Activated CD4-positive, alpha-beta T cell treated with anti-CD3 and anti-CD28 coated beads, Interleukin-2, amount 10 ng/mL, durations not matched to agents 24 days and 14 days (primary cell): ENCODE measurements at regions of chr5 and their contacts with region 1.

Region 1: GRCh38 chr5:175657593-175658271 is at the start of gene HRH2:
- DNase-seq: peak; percentile 90
- H3K4me3 Mint-ChIP-seq: peak within 1 kb of the TSS; percentile 100
- H3K27ac Mint-ChIP-seq: peak within 1 kb of the TSS; percentile 98
- H3K4me1 Mint-ChIP-seq: peaks cover 77% of the 10 kb centered on the region
- H3K27me3 Mint-ChIP-seq: peaks cover 2% of the 10 kb centered on the region
- total RNA-seq, gene HRH2: 67.3 and 70.4 TPM in 2 replicates

Region 2: GRCh38 chr5:173887610-173888472 is 1769.9 kb before region 1 on chr5 and contains the start of gene CPEB4:
- intact Hi-C with region 1: loop called (anchors 10 kb)
- DNase-seq: peak; percentile 99
- H3K4me3 Mint-ChIP-seq: peak within 1 kb of the TSS; percentile 96
- H3K27ac Mint-ChIP-seq: peak within 1 kb of the TSS; percentile 99
- H3K4me1 Mint-ChIP-seq: peaks cover 60% of the 10 kb centered on the region
- H3K27me3 Mint-ChIP-seq: no peaks in the 10 kb centered on the region
- total RNA-seq, gene CPEB4: 7.6 and 8.8 TPM in 2 replicates

Region 3: DNA sequence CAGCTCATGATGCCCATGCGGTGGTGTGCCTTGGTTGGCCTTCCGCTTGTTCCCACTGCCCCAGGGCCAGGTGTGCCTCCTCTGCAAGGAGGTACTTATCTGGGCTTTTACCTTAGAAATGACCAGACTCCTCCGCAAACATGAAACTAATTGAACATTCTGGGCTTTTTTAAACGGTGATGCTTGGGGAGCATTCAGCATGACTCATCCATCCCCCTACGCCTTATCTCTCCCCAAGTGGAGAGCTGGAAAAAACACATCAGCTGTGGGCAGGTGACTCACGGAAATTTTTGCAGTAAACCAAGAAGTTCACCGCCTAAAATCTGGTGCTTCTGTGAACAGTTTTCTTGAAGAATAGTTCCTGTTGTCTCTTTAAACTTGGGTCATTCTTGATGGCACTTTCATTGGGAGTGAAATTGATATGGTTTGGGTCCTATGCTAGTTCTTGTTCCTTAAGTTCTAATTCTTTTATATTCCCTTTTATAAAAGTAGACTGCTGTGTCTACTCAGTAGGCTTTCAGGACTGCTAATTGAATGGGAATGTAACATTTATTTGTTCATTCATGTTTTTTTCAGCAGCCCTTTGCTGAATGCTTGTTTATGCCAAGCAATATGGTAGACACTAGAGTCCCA is 139.8 kb before region 1 on chr5:
- intact Hi-C with region 1: loop called (anchors 1 kb)
- DNase-seq: peak; percentile 91
- H3K4me3 Mint-ChIP-seq: peak overlapping the region; percentile 73
- H3K27ac Mint-ChIP-seq: peak overlapping the region; percentile 95
- H3K4me1 Mint-ChIP-seq: peaks cover 79% of the 10 kb centered on the region
- H3K27me3 Mint-ChIP-seq: peaks cover 2% of the 10 kb centered on the region

Region 4: GRCh38 chr5:175609526-175609925 is 48.2 kb before region 1 on chr5:
- intact Hi-C with region 1: loop called (anchors 5 kb)
- DNase-seq: peak; percentile 65
- H3K4me3 Mint-ChIP-seq: no peak overlapping the region
- H3K27ac Mint-ChIP-seq: no peak overlapping the region
- H3K4me1 Mint-ChIP-seq: peaks cover 2% of the 10 kb centered on the region
- H3K27me3 Mint-ChIP-seq: peaks cover 18% of the 10 kb centered on the region

Region 5: GRCh38 chr5:175696139-175696854 is 38.6 kb after region 1 on chr5:
- intact Hi-C with region 1: loop called (anchors 1 kb)
- DNase-seq: peak; percentile 92
- H3K4me3 Mint-ChIP-seq: peak overlapping the region; percentile 62
- H3K27ac Mint-ChIP-seq: peak overlapping the region; percentile 85
- H3K4me1 Mint-ChIP-seq: peaks cover 33% of the 10 kb centered on the region
- H3K27me3 Mint-ChIP-seq: no peaks in the 10 kb centered on the region

Region 6: GRCh38 chr5:175821790-175822211 is 164.1 kb after region 1 on chr5:
- intact Hi-C with region 1: loop called (anchors 2 kb)
- DNase-seq: no peak
- H3K4me3 Mint-ChIP-seq: peak overlapping the region; percentile 54
- H3K27ac Mint-ChIP-seq: peak overlapping the region; percentile 74
- H3K4me1 Mint-ChIP-seq: peaks cover 13% of the 10 kb centered on the region
- H3K27me3 Mint-ChIP-seq: no peaks in the 10 kb centered on the region